Lower lobe of right lung (tissue), 2 donors: ENCODE measurements at regions of chrX and their contacts with region 1.

Region 1: GRCh38 chrX:15493118-15493962 is at the start of gene PIR:
- DNase-seq: peak; percentile 91
- ATAC-seq: peak; percentile 99 to 100
- H3K4me3 ChIP-seq: peak within 1 kb of the TSS; percentile 55
- H3K27ac ChIP-seq: peak within 1 kb of the TSS; percentile 58
- H3K4me1 ChIP-seq: peaks cover 5% of the 10 kb centered on the region
- H3K27me3 ChIP-seq: no peaks in the 10 kb centered on the region
- CTCF ChIP-seq: peak; percentile 30
- total RNA-seq, gene PIR: 19.8 TPM

Region 2: DNA sequence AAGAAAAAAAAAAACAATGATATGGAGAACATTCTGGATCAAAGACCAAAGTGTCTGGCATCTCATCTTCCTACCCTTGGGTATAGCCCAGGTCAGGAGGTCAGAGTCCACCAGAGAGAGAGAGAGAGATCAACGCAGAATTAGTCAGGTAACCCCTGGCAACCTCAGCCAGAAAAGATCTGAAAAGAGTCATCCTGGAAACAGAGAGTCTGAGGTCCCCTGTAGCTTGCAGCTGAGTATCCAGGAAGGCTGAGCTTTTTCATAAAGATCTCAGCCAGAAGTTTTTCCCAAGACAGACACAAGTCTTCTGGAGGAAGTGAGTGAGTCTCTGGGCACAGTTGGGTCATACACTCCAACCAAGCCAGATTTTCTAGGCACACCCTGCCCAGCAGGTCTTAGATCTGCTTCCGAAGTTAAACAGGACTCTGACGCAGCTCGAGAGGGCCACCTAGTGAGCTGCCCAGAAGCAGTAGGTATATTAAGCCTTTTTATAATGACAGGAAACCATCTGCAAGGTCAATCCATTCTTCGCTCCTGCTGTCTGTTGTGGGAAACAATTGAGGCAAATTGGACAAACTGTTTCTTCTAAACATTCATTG is 71.7 kb after region 1 on chrX:
- intact Hi-C with region 1: loop called (anchors 10 kb)
- DNase-seq: peak; percentile 73
- ATAC-seq: peak; percentile 91
- H3K4me3 ChIP-seq: no peak overlapping the region
- H3K27ac ChIP-seq: no peak overlapping the region
- H3K4me1 ChIP-seq: no peaks in the 10 kb centered on the region
- H3K27me3 ChIP-seq: no peaks in the 10 kb centered on the region
- CTCF ChIP-seq: peak; percentile 56